ENCODE measurements at regions of chr13 and their contacts with region 1.

Region 1: GRCh38 chr13:36282818-36283445 is 14.7 kb downstream of the CCDC169 start:
- DNase-seq: peak; percentile 24
- H3K4me3 ChIP-seq: no peak overlapping the region
- H3K27ac ChIP-seq: no peak overlapping the region
- H3K4me1 ChIP-seq: no peaks in the 10 kb centered on the region
- H3K27me3 ChIP-seq: no peaks in the 10 kb centered on the region
- CTCF ChIP-seq: peak; percentile 81 to 90

Region 2: GRCh38 chr13:36420437-36420891 is 137.5 kb after region 1 on chr13:
- CTCF ChIA-PET with region 1: no interaction called
- dilution Hi-C with region 1: no loop called
- in situ Hi-C with region 1: no loop called
- intact Hi-C with region 1: loop called (anchors 2 kb)
- DNase-seq: peak; percentile 62
- H3K4me3 ChIP-seq: no peak overlapping the region
- H3K27ac ChIP-seq: no peak overlapping the region
- H3K4me1 ChIP-seq: peaks cover 35% of the 10 kb centered on the region
- H3K27me3 ChIP-seq: no peaks in the 10 kb centered on the region
- CTCF ChIP-seq: peak; percentile 89 to 94

Region 3: DNA sequence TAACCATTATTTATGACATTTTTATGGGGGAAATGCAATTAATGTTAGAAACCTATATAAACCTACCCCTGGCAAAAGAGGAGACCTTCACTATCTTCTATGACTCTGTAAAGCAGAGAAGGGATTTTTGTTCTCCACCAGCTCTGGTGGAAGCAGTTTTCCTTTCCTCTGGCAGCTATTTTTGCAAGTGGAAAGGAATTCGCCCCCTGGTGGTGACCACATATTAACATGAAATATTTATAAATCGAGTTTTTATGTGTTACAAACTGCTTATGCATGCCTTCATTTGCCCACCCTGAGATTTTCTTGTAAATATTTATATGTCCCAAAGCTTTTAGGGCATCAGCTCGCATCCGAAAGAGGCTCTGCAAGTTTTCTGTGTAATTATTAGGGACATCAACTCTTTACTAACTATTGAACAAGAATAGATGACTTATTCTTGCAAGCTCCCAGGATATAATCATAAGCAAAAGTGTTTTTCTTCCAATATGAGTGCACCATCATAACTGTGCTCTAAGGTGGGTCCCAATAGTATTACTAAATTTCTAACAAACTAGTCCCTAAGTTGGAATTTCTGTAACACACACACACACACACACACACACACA is 453.3 kb after region 1 on chr13:
- CTCF ChIA-PET with region 1: no interaction called
- dilution Hi-C with region 1: no loop called
- in situ Hi-C with region 1: loop called in 1 of 2 experiments (anchors 25 kb)
- intact Hi-C with region 1: loop called (anchors 1 kb)
- DNase-seq: peak; percentile 16
- H3K4me3 ChIP-seq: no peak overlapping the region
- H3K27ac ChIP-seq: no peak overlapping the region
- H3K4me1 ChIP-seq: no peaks in the 10 kb centered on the region
- H3K27me3 ChIP-seq: no peaks in the 10 kb centered on the region
- CTCF ChIP-seq: peak; percentile 48 to 65

Region 4: GRCh38 chr13:36848199-36848982 is 565.5 kb after region 1 on chr13:
- CTCF ChIA-PET with region 1: no interaction called
- dilution Hi-C with region 1: no loop called
- in situ Hi-C with region 1: no loop called
- intact Hi-C with region 1: loop called (anchors 10 kb)
- DNase-seq: no peak
- H3K4me3 ChIP-seq: no peak overlapping the region
- H3K27ac ChIP-seq: no peak overlapping the region
- H3K4me1 ChIP-seq: no peaks in the 10 kb centered on the region
- H3K27me3 ChIP-seq: no peaks in the 10 kb centered on the region
- CTCF ChIP-seq: peak in 1 of 2 donors; percentile 25

Region 5: GRCh38 chr13:37068962-37069361 is 786.0 kb after region 1 on chr13:
- CTCF ChIA-PET with region 1: no interaction called
- dilution Hi-C with region 1: no loop called
- in situ Hi-C with region 1: no loop called
- intact Hi-C with region 1: loop called (anchors 10 kb)
- DNase-seq: no peak
- H3K4me3 ChIP-seq: no peak overlapping the region
- H3K27ac ChIP-seq: no peak overlapping the region
- H3K4me1 ChIP-seq: no peaks in the 10 kb centered on the region
- H3K27me3 ChIP-seq: no peaks in the 10 kb centered on the region
- CTCF ChIP-seq: peak; percentile 18 to 31